ENCODE measurements at regions of chr2 and their contacts with region 1.

Region 1: GRCh38 chr2:97806738-97807618 is 93.6 kb downstream of the ZAP70 start:
- DNase-seq: peak; percentile 68
- ATAC-seq: peak; percentile 96
- H3K4me3 Mint-ChIP-seq: no peak overlapping the region
- H3K27ac Mint-ChIP-seq: no peak overlapping the region
- H3K4me1 Mint-ChIP-seq: no peaks in the 10 kb centered on the region
- H3K27me3 Mint-ChIP-seq: no peaks in the 10 kb centered on the region
- CTCF ChIP-seq: peak; percentile 33

Region 2: DNA sequence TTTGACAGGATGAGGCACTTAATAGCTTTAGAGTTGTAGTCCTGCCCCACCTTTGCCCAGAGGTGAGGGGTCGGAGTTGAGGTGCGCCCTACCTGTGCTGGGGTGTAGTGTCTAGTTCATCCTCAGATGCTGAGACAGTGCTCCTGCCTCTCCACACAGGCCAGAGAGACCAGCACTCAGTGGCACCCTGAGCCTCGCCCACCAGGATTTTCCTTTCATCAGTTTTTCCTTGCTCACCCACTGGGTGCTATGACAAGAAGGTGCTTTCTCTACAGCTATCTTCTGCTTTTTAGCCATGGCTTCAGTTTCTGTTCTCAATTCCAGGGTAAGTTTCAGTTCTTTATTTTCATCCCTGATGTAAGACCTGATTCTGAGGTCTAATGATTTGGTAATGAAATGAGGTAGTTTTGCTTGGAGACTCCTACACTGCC is 205.6 kb after region 1 on chr2:
- CTCF ChIA-PET with region 1: interaction called, 5 read pairs
- POLR2A ChIA-PET with region 1: no interaction called
- intact Hi-C with region 1: loop called (anchors 1 kb)
- DNase-seq: peak; percentile 61
- ATAC-seq: peak; percentile 81
- H3K4me3 Mint-ChIP-seq: peak overlapping the region; percentile 79
- H3K27ac Mint-ChIP-seq: peak overlapping the region; percentile 96
- H3K4me1 Mint-ChIP-seq: peaks cover 75% of the 10 kb centered on the region
- H3K27me3 Mint-ChIP-seq: no peaks in the 10 kb centered on the region
- CTCF ChIP-seq: no peak

Region 3: DNA sequence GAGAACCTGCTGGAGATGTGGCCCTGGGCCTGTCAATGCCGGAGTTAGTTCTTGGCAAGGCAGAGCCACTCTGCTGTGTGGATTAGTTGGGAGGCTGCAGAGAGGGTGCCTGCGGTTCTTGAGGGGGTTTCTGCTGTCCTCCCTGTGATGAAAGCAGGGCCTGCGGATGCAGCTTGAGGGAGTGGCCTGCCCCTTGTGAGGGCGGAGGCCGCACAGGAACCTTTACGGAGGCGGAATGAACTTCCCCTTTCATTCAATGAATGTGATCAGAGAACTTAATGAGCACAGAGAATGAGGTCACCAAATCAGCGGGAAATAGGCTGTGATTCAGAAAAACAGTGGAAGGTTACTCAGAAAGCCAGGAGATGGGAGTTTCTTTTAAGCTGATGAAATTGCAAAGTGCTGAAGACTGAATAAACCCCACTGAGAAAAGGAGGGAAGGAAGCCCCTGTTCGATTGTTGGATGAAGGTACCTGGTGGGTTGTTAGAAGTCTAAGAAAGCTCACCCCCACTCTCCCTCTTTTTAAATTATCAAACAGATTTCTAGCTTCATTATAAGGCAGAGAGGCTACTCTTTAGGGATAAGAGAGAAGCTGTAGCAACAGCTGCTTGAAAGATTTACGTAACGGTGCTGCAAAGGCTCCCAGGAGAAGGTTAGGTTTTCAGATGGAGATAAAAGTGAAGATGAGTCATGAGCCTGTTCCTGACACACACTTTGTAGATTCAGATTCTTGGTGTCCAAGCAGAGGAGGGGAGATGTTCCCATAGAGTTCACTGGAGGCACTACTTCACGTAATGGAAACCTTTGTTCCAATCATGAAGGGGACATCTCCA is 327.4 kb after region 1 on chr2:
- CTCF ChIA-PET with region 1: interaction called, 3 read pairs
- POLR2A ChIA-PET with region 1: no interaction called
- intact Hi-C with region 1: loop called (anchors 1 kb)
- DNase-seq: peak; percentile 60
- ATAC-seq: peak; percentile 99
- H3K4me3 Mint-ChIP-seq: peak overlapping the region; percentile 29
- H3K27ac Mint-ChIP-seq: peak overlapping the region; percentile 18
- H3K4me1 Mint-ChIP-seq: peaks cover 20% of the 10 kb centered on the region
- H3K27me3 Mint-ChIP-seq: no peaks in the 10 kb centered on the region
- CTCF ChIP-seq: no peak

Region 4: DNA sequence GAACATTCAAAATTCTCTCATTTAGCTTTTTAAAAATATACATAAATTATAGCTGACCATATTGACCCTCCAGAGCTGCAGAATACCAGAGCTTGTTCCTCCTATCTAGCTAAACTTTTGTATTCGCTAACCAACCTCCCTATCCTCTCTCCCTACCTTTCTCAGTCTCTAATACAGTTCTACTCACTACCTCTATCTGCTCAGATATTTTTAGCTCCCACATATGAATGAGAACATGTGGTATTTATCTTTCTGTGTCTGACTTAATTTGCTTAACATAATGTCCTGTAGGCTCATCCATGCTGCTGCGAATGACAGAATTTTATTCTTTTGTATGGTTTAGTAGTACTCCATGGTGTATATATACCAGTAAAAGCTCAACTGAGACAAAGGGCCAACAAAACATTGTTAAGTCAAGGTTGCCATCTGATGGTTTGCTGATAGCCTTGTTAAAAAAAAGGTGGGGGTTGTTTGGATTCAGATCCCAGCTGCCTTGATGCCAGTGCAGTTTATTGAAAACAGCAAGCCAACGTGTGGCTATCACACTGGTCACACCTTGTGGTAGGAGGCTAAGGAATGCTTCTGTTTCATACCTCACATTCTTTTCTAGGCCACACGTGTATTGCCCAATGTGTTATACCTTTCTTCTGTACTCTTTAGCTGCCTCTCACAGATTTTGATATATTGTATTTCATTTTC is 381.5 kb after region 1 on chr2:
- CTCF ChIA-PET with region 1: interaction called, 42 read pairs
- POLR2A ChIA-PET with region 1: interaction called, 4 read pairs
- intact Hi-C with region 1: loop called (anchors 1 kb)
- DNase-seq: no peak
- ATAC-seq: no peak
- H3K4me3 Mint-ChIP-seq: no peak overlapping the region
- H3K27ac Mint-ChIP-seq: no peak overlapping the region
- H3K4me1 Mint-ChIP-seq: no peaks in the 10 kb centered on the region
- H3K27me3 Mint-ChIP-seq: peaks cover 2% of the 10 kb centered on the region
- CTCF ChIP-seq: no peak

Region 5: GRCh38 chr2:98385050-98385699 is 578.2 kb after region 1 on chr2:
- CTCF ChIA-PET with region 1: interaction called, 34 read pairs
- POLR2A ChIA-PET with region 1: interaction called, 4 read pairs
- intact Hi-C with region 1: loop called (anchors 1 kb)
- DNase-seq: peak; percentile 58
- ATAC-seq: peak; percentile 78
- H3K4me3 Mint-ChIP-seq: no peak overlapping the region
- H3K27ac Mint-ChIP-seq: no peak overlapping the region
- H3K4me1 Mint-ChIP-seq: no peaks in the 10 kb centered on the region
- H3K27me3 Mint-ChIP-seq: peaks cover 10% of the 10 kb centered on the region
- CTCF ChIP-seq: peak; percentile 50

Measured in activated B cell treated with CpG ODN at 0.5 μM for 24 hours (primary cell).